ENCODE measurements at regions of chr17 and their contacts with region 1.

Region 1: GRCh38 chr17:78883164-78884122 is 19.6 kb downstream of the CEP295NL start:
- DNase-seq: peak; percentile 91 to 93
- ATAC-seq: peak; percentile 83
- H3K4me3 ChIP-seq: no peak overlapping the region
- H3K27ac ChIP-seq: peak overlapping the region; percentile 3 to 89
- H3K4me1 ChIP-seq: no peaks in the 10 kb centered on the region
- H3K27me3 ChIP-seq: no peaks in the 10 kb centered on the region

Region 2: GRCh38 chr17:78706271-78706915 is 177.1 kb before region 1 on chr17:
- intact Hi-C with region 1: no loop called
- DNase-seq: no peak
- ATAC-seq: no peak
- H3K4me3 ChIP-seq: no peak overlapping the region
- H3K27ac ChIP-seq: no peak overlapping the region
- H3K4me1 ChIP-seq: no peaks in the 10 kb centered on the region
- H3K27me3 ChIP-seq: no peaks in the 10 kb centered on the region

Region 3: DNA sequence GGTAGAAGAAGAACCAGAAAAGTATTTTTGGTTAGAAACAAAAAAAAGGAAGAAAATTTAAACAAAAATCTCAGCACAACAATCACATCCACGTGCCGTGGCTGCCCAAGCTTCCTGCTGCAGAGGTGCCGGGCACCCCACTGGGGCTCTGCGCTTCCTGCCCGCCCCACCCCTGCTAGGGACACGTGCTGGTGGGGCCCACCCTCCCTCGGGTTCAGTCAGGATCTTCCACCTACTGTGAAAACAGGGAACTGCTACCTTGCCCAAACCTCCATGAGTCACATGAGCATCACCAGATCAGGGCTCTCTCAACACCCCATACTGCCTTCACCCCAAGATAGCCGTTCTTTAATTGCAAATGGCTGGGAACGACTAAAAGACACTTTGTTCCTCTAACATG is 77.0 kb before region 1 on chr17:
- intact Hi-C with region 1: no loop called
- DNase-seq: peak in 1 of 2 donors; percentile 68
- ATAC-seq: no peak
- H3K4me3 ChIP-seq: no peak overlapping the region
- H3K27ac ChIP-seq: no peak overlapping the region
- H3K4me1 ChIP-seq: no peaks in the 10 kb centered on the region
- H3K27me3 ChIP-seq: no peaks in the 10 kb centered on the region

Region 4: DNA sequence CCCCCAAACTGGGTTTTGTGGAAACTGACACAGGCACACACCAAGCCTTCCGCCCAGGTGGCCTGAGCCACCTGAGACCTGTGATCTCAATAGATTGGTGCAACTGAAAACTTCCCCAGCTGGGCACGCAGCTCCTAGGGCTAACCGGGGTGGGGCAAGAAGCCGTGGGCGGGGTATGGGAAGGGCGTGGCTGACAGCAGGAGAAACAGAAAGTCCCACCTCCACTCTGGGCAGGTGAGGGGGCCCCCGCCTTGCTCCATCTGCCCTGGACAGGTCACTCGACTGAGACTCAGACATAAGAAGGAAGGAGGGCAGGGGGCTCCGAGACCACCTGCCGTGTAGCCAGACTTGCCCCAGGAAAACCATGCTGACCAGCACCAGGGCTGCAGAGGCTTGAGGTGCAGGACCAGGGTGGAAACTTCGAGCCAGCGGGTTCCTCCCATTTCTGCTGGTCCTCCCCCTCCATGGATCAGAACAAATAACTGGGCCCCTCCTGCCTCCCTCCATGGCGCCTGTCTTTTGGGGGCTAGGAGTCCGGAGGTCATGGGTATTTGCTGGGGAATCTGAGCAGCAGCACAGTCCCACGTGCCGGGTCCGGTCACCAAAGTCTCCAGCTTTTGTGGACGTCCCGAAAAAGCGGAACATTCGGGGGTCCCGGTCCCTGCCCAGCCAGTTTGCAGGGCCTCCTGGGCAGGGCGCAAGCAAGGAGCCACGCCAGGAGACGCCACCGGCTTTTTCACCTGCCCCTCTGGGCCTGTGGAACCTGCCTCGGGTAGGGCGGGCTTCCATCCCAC is 40.4 kb after region 1 on chr17:
- intact Hi-C with region 1: loop called (anchors 5 kb)
- DNase-seq: peak; percentile 80 to 88
- ATAC-seq: no peak
- H3K4me3 ChIP-seq: peak overlapping the region; percentile 91
- H3K27ac ChIP-seq: peak overlapping the region in 1 of 2 donors; percentile 71
- H3K4me1 ChIP-seq: peaks cover 2 to 5% of the 10 kb centered on the region in 2 donors
- H3K27me3 ChIP-seq: no peaks in the 10 kb centered on the region

Region 5: DNA sequence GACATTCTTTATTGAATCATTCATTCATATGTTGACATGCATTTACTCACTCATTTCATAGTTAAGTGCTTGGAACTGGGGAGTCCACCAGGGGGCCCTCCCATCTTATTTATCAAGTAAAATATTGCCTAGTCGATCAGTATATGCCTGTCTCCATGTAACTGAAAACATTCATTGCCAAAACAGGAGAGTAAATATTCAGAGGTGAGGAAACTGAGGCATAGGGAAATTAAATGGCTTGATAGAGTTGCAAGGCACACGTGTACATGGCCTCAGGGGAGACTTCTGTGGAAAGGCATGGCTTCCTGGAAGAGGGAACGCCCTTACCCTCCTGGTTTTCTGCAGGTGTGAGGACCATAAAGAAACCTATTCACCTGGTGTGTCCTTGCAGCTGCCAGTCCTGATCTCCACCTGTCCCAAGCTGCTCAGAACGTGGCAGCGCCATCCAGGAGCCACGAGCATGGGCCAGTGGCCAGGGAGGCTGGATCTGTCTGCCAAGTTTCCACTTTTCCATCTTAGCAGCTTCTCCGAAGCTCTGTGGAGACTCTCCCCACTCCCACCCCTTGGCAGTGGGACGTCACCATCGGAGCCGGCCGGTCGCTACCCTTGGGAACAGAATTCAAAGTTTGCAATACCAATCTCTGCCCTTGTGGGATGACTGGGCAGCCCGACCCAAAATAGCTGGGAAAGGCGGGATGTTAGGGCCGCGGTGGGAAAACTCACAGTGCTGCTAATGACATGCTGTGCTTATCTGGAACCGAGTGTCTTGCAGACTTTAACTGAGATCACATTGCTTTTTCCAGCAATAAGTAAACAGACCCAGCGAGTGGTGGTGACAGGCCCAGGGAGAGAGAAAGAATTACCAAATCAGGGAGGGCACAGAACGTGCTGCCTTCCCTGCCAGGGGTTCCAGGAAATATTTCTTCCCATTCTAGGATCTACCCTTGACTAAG is 136.5 kb after region 1 on chr17:
- intact Hi-C with region 1: no loop called
- DNase-seq: peak; percentile 86 to 94
- ATAC-seq: peak; percentile 86
- H3K4me3 ChIP-seq: no peak overlapping the region
- H3K27ac ChIP-seq: peak overlapping the region; percentile 53 to 92
- H3K4me1 ChIP-seq: peaks cover 0 to 7% of the 10 kb centered on the region in 2 donors
- H3K27me3 ChIP-seq: no peaks in the 10 kb centered on the region